Activated naive CD4-positive, alpha-beta T cell treated with anti-CD3 and anti-CD28 coated beads for 36 hours (primary cell): ENCODE measurements at regions of chr9 and their contacts with region 1.

Region 1: DNA sequence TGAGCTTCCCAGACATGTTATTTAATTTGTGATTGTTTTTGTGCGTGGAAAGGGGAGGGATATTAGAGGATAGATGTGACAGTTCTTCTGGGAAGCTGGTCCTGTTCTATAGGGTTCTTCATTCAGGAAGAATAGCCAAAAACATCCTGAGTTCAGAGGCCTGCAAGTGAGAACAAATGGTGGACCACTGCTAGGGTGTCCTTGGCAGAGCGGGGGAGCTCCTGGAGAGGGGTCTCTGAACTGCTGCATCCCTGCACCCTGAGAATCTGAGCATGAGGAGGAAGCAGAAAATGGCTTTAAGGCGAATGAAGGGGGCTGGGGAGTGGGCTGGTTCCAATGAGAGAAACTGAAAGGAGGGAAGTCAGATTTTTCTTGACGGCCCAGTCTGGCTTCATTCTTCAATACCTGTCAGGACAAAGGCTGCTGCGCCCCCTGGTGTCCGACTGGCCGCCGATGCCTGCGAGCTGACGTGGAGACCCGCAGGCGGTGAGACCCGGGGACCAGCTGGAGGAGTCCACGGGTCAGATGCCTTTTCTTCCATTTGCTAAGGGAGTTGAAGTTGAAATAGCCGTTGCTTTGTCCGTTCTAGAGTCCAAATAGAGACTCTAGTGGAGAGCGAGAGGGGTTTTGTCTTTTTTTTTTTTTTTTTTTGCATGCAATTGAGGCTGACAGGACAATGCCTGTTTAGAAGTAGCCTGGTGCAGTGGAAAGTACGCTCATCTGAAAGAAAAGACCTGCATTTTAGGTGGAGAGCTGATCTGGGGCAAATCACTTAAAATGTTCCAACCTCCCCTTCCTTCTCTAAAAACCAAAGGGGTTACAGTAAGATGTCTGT is 39.5 kb upstream of the NFIB start:
- DNase-seq: peak; percentile 88
- H3K4me3 Mint-ChIP-seq: no peak overlapping the region
- H3K27ac Mint-ChIP-seq: no peak overlapping the region
- H3K4me1 Mint-ChIP-seq: peaks cover 3% of the 10 kb centered on the region
- H3K27me3 Mint-ChIP-seq: peaks cover 58% of the 10 kb centered on the region

Region 2: DNA sequence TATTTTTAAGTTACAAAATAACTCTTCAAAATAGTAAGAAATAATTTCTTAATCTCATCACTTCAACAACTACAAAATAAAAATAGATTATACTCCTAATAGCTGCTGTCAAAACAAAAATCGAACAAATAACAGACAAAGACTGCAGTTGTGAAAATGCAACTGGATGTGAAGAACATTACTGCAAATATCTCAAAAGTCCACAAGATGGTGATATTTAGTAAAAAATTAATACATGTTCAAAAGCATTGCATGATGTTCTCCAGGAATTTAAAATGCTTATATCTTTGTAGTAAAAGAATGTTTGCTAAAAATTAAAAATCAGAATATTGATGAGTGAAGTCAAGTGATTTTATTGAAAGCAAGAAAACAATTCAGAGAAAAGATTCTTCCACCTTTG is 1140.1 kb before region 1 on chr9:
- CTCF ChIA-PET with region 1: no interaction called
- intact Hi-C with region 1: loop called (anchors 10 kb)
- DNase-seq: no peak
- H3K4me3 Mint-ChIP-seq: no peak overlapping the region
- H3K27ac Mint-ChIP-seq: no peak overlapping the region
- H3K4me1 Mint-ChIP-seq: no peaks in the 10 kb centered on the region
- H3K27me3 Mint-ChIP-seq: no peaks in the 10 kb centered on the region

Region 3: GRCh38 chr9:13351778-13352386 is 1001.6 kb before region 1 on chr9:
- CTCF ChIA-PET with region 1: no interaction called
- intact Hi-C with region 1: loop called (anchors 5 kb)
- DNase-seq: no peak
- H3K4me3 Mint-ChIP-seq: no peak overlapping the region
- H3K27ac Mint-ChIP-seq: no peak overlapping the region
- H3K4me1 Mint-ChIP-seq: no peaks in the 10 kb centered on the region
- H3K27me3 Mint-ChIP-seq: no peaks in the 10 kb centered on the region

Region 4: DNA sequence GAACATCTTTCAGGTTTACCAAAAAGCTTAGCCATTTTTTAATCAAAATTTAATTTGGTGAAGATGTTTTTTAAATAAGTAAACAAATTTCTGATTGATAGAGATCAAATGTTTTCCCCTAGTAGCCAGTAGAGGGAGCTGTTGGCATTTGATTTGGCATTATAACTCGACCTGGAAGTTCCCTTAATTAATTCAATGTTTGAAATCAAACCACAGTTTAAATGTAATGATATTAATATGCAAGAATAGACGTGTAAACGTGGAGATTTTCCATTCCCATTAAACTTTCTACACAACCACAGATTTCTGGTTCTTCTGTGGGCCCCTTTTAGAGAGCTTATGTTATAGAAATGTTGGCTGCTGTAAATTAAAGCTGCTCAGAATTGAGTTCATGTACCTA is 925.9 kb before region 1 on chr9:
- CTCF ChIA-PET with region 1: interaction called, 8 read pairs
- intact Hi-C with region 1: loop called (anchors 1 kb)
- DNase-seq: no peak
- H3K4me3 Mint-ChIP-seq: no peak overlapping the region
- H3K27ac Mint-ChIP-seq: no peak overlapping the region
- H3K4me1 Mint-ChIP-seq: no peaks in the 10 kb centered on the region
- H3K27me3 Mint-ChIP-seq: peaks cover 2% of the 10 kb centered on the region

Region 5: DNA sequence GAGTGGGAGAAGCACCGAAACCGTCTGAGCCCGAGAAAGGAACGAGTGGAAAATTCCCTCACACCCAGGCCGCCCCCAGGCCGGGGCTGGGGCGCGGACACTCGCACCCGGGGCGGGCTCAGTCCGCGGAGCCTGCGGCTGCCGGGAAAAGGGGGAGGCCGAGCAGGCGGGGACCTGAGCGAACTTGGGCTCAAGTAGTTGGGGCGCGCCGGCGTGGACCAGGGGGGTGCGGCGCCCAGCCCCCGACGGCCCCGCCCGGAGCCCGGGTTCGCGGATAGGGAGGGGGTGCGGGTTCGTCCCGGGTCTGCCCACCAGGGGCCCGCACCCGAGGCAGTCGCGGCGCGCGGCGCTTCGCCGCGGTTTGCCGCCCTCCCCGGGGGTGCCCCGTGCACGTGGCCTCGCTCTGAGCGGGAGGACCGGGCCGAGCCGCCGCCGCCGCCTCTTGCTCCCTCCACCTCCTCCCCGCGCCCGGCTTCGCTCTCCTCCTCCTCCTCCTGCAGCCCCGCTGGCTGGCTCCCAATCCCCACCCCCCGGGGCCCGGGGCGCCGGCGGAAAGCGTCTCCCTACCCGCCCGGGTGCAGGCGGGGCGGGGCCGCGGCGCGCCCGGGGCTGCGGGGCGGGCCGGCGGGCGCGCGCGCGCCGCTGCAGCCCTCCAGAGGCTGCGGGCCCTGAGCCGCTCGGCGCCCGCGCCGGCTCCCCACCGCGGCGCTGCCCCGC is 38.4 kb before region 1 on chr9:
- CTCF ChIA-PET with region 1: no interaction called
- intact Hi-C with region 1: loop called (anchors 1 kb)
- DNase-seq: peak; percentile 16
- H3K4me3 Mint-ChIP-seq: peak overlapping the region; percentile 72
- H3K27ac Mint-ChIP-seq: no peak overlapping the region
- H3K4me1 Mint-ChIP-seq: peaks cover 16% of the 10 kb centered on the region
- H3K27me3 Mint-ChIP-seq: peaks cover 52% of the 10 kb centered on the region

Region 6: DNA sequence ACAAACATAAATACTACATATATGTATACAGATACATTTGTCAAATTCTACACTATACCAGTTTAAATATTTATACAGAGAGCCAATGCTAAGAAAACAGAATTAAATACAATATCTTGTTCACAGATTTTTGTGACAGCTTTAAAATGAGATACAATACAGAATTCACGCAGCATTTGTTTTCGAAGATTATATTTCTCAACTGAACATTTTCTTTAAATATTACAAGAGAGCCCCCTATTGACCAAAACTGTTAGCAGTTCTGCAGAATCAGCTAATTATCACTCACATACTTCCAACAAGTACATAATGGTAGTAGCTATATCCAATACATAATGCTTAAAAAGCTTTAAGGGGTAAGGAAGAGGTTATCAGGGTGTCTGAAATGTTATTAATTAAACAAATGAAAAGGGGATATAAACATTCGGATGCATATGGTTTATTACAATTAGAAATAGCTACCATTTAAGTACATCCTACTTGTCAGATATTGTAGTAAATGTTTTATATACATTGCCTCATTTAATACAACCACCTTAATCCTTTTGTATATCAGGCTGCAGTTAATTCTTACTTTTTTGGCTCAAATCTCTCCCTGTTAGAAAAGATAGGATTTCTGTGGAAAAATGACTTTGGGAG is 308.1 kb after region 1 on chr9:
- CTCF ChIA-PET with region 1: no interaction called
- intact Hi-C with region 1: loop called (anchors 5 kb)
- DNase-seq: no peak
- H3K4me3 Mint-ChIP-seq: no peak overlapping the region
- H3K27ac Mint-ChIP-seq: no peak overlapping the region
- H3K4me1 Mint-ChIP-seq: no peaks in the 10 kb centered on the region
- H3K27me3 Mint-ChIP-seq: no peaks in the 10 kb centered on the region

Region 7: GRCh38 chr9:14768405-14769229 is 415.2 kb after region 1 on chr9:
- CTCF ChIA-PET with region 1: interaction called, 3 read pairs
- intact Hi-C with region 1: loop called (anchors 10 kb)
- DNase-seq: no peak
- H3K4me3 Mint-ChIP-seq: no peak overlapping the region
- H3K27ac Mint-ChIP-seq: no peak overlapping the region
- H3K4me1 Mint-ChIP-seq: peaks cover 2% of the 10 kb centered on the region
- H3K27me3 Mint-ChIP-seq: peaks cover 15% of the 10 kb centered on the region